Activated T-helper 2 cell treated with anti-CD3 and anti-CD28 coated beads, Interferon-gamma antibody, Interleukin-2, Interleukin-4, amounts not matched to agents 10 μg/mL and 5 μg/mL and 100 μg/mL, durations not matched to agents 14 hours and 24 hours and 36 hours (primary cell): ENCODE measurements at regions of chr10 and their contacts with region 1.

Region 1: GRCh38 chr10:92689663-92690210 is at the start of gene HHEX:
- DNase-seq: no peak
- H3K4me3 Mint-ChIP-seq: peak within 1 kb of the TSS; percentile 62
- H3K27ac Mint-ChIP-seq: no peak within 1 kb of the TSS
- H3K4me1 Mint-ChIP-seq: peaks cover 21% of the 10 kb centered on the region
- H3K27me3 Mint-ChIP-seq: peaks cover 72% of the 10 kb centered on the region
- total RNA-seq, gene HHEX: 0.32 and 0.46 TPM in 2 replicates

Region 2: GRCh38 chr10:92965314-92965713 is 275.6 kb after region 1 on chr10:
- intact Hi-C with region 1: no loop called
- DNase-seq: no peak
- H3K4me3 Mint-ChIP-seq: no peak overlapping the region
- H3K27ac Mint-ChIP-seq: no peak overlapping the region
- H3K4me1 Mint-ChIP-seq: no peaks in the 10 kb centered on the region
- H3K27me3 Mint-ChIP-seq: no peaks in the 10 kb centered on the region

Region 3: GRCh38 chr10:93068411-93069244 is 378.9 kb after region 1 on chr10:
- intact Hi-C with region 1: loop called (anchors 2 kb)
- DNase-seq: no peak
- H3K4me3 Mint-ChIP-seq: no peak overlapping the region
- H3K27ac Mint-ChIP-seq: no peak overlapping the region
- H3K4me1 Mint-ChIP-seq: peaks cover 13% of the 10 kb centered on the region
- H3K27me3 Mint-ChIP-seq: peaks cover 84% of the 10 kb centered on the region